Posterior vena cava (tissue), 2 donors: ENCODE measurements at regions of chr6 and their contacts with region 1.

Region 1: GRCh38 chr6:16277101-16277981 is 39.0 kb downstream of the GMPR start:
- DNase-seq: peak; percentile 88

Region 2: GRCh38 chr6:15254070-15254841 is 1023.1 kb before region 1 on chr6:
- intact Hi-C with region 1: no loop called
- DNase-seq: no peak

Region 3: GRCh38 chr6:16216501-16217155 is 60.7 kb before region 1 on chr6:
- intact Hi-C with region 1: loop called in 1 of 2 experiments (anchors 2 kb)
- DNase-seq: no peak

Region 4: DNA sequence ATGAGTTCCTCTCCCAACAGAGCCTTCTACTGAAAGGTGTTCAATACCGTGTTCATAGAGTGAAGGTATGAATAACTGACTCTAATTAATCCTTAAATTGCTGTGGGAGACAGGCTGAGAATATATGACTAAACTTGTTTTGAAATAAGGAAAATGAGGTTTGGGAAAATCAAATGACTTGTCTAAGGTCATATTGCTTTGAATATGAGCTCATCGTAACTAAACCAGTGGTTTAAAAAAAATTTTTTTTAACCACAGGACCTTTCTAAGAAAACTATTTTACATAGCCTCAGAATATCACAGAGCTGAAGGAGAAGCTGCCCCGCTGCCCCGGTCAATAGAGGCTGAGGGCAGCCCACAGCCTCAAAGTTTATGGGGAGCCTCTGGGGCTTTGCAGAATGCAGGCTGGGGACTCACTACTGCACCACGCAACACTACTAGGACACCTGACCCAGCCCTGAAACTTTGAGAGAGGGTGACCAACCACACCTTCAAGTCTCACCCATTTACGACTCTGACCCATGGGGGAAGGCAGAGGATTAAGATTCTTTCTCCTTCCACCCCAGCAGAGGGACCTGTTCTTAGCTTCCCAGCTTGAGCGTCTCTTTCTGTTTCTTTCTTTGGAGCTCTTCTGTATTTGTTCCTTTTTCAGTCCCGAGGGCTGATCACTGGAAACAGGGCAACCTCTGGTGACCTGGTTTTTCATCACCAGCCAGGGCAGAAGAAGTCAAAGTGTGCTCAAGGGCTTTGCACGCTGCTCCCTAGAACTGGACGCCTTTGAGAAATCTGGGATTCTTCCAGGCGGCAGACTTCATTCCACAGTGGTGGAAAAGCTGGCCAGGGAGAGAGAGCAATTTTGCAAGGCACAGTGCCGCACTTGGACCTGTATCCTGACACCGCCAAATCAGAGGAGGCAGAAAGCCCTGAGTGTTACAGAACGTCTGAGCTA is 263.7 kb after region 1 on chr6:
- intact Hi-C with region 1: no loop called
- DNase-seq: peak; percentile 79